ENCODE measurements at regions of chr2 and their contacts with region 1.

Region 1: DNA sequence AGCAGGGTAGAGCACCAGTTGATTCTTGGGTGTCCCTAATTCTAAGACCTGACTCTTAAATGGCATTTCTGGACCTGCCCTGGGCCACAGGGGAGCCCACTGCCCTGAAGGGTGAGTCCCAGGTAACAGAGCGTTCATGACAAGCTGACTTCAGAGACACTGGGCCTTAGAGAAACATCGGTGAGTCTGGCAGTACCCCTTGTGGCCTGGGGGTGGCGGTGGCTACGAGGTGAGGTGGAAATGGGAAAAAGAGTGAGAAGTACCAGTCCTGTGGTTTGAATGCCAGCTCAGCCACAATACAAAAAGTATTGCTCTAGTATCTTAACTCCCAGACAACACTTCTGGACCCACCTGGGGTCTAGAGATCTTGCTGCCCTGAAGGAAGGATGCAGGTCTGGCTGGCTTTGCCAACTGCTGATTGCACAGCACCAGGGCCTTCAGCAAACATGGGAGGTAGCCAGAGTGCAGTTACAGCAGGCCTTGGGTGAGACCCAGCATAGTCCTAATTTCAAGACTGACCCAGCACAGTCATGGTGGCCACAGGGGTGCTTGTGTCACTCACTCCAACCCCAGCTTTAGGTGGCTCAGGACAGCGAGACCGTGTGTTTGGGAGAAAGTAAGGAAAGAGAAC is 44.5 kb downstream of the USP34 start:
- DNase-seq: peak; percentile 77 to 80
- ATAC-seq: peak; percentile 94 to 95
- H3K4me3 ChIP-seq: no peak overlapping the region
- H3K27ac ChIP-seq: peak overlapping the region in 1 of 2 experiments; percentile 32; a peak in 2 of 6 replicates
- H3K4me1 ChIP-seq: peaks cover 45% of the 10 kb centered on the region
- CTCF ChIP-seq: peak; percentile 67
- EP300 ChIP-seq: no peak
- POLR2A ChIP-seq: no peak
- RAD21 ChIP-seq: peak; percentile 76 to 82

Region 2: GRCh38 chr2:61220768-61221167 is 205.6 kb before region 1 on chr2:
- CTCF ChIA-PET with region 1: no interaction called
- POLR2A ChIA-PET with region 1: no interaction called
- DNase-seq: no peak
- ATAC-seq: no peak
- H3K4me3 ChIP-seq: no peak overlapping the region
- H3K27ac ChIP-seq: no peak overlapping the region
- H3K4me1 ChIP-seq: 0 out of 3 replicates have a peak, but pooled peaks cover 3% of the 10 kb centered on the region
- CTCF ChIP-seq: no peak
- EP300 ChIP-seq: no peak
- POLR2A ChIP-seq: no peak
- RAD21 ChIP-seq: no peak

Region 3: GRCh38 chr2:61415265-61415664 is 11.1 kb before region 1 on chr2:
- CTCF ChIA-PET with region 1: interaction called, 13 read pairs
- POLR2A ChIA-PET with region 1: no interaction called
- DNase-seq: no peak
- ATAC-seq: no peak
- H3K4me3 ChIP-seq: no peak overlapping the region
- H3K27ac ChIP-seq: no peak overlapping the region
- H3K4me1 ChIP-seq: peaks cover 39% of the 10 kb centered on the region
- CTCF ChIP-seq: no peak
- EP300 ChIP-seq: no peak
- POLR2A ChIP-seq: no peak
- RAD21 ChIP-seq: no peak

Region 4: DNA sequence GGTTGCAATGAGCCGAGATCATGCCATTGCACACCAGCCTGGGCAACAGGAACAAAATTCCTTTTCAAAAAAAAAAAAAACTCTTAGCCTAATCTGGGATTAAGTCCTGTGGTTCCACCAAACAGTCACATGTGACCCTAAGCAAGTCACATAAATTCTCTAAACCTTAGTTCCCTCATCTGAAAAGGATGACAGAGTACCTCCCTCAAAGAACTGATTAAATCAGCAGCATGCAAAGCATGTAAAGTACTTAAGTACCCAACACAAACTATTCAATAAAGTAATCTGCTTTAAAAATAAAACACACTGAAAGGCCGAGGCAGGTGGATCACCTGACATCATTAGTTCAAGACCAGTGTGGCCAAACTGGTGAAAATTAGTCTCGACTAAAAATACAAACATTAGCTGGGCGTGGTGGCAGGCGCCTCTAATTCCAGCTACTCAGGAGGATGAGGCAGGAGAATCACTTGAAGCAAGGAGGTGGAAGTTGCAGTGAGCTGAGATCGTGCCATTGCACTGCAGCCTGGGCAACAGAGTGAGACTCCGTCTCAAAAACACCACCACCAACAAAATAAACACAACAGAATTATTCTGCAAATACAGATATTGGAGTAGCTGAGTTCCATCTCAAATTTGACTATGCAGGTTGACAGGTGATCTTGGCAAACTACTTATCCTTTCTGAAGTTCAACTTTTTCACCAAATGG is 37.5 kb after region 1 on chr2:
- CTCF ChIA-PET with region 1: interaction called, 10 read pairs
- POLR2A ChIA-PET with region 1: no interaction called
- DNase-seq: no peak
- ATAC-seq: no peak
- H3K4me3 ChIP-seq: no peak overlapping the region
- H3K27ac ChIP-seq: 0 out of 6 replicates have a peak overlapping the region, but pooled peaks of 1 of the 2 experiments have one; percentile 5
- H3K4me1 ChIP-seq: peaks cover 73% of the 10 kb centered on the region
- CTCF ChIP-seq: no peak
- EP300 ChIP-seq: no peak
- POLR2A ChIP-seq: no peak
- RAD21 ChIP-seq: no peak

Measured in A549 (cell line).